PC-9 (cell line): ENCODE measurements at regions of chr15 and their contacts with region 1.

Region 1: DNA sequence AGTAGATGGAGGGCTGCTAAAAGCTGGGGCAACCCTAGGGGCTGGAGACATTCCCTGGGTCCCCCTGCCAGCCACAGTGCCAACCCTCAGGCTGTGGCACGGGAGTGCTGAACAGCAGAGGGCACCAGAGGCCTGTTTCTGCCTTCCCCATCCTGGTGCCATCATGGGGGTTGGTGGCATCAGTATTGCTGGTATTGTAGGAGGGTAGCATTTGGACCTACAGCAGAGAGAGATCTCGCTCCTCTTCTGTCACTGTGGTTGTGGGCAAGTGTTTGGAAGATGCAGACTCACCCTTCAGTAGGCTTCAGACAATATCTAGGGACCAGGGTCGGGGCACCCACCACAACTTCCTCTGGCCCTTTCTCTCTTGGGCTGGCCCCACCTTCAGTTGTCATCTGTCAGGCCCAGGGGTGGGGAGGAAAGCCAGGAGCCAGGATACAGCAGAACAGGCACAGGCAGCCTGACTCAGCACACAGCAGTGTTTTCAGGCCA is 123.5 kb downstream of the RPLP1 start:
- DNase-seq: peak in 1 of 2 experiments; percentile 71
- H3K4me3 ChIP-seq: no peak overlapping the region
- H3K27ac ChIP-seq: no peak overlapping the region
- H3K4me1 ChIP-seq: peaks cover 60% of the 10 kb centered on the region
- H3K27me3 ChIP-seq: no peaks in the 10 kb centered on the region
- CTCF ChIP-seq: peak; percentile 76

Region 2: DNA sequence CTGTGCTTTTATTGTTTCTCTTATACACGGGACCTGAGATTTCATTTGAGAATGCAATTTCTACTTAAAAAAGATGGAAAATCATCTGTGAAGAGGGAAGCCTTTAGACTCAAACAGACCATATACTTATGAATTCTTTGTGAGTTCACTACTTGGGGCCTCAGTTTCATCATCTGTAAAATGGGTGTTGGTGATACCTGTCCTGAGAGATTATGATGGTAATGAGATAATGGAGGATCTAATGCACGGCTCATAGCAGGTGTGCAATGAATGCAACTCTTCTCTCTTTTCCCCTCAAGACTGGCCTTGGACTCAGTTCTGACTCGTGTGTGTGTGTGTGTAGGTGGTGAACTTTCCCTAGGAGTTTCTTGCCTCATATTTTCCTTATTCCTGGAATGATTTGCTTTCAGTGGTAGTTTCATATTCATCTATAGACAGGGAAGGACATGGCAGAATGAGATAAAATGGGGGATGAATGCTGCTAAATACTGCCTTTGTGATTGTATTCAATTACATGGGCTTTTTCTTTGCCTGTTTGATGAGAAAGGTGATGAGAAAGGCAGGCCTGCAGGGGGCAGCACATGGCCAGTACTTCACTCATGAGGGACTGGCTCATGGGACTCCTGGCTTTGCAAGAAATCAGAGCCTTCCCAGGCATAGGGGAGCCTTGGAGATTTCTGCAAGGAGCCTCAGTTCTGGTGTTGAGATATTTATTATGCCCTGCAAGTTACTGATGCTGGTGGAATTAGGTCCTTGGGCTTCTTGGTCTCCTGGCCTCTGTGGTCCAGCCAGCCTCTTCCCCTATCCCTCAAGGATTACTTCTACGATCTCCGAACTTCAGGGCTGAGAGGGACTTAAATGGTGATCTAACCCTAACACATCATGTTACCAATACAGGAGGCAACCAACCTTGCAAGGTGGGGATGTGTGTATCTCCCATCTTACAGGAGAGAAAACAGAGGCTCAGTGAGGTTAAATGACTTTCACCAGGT is 52.8 kb before region 1 on chr15:
- CTCF ChIA-PET with region 1: no interaction called
- POLR2A ChIA-PET with region 1: no interaction called
- intact Hi-C with region 1: loop called (anchors 1 kb)
- DNase-seq: peak; percentile 40 to 75
- H3K4me3 ChIP-seq: no peak overlapping the region
- H3K27ac ChIP-seq: peak overlapping the region; percentile 58
- H3K4me1 ChIP-seq: peaks cover 19% of the 10 kb centered on the region
- H3K27me3 ChIP-seq: no peaks in the 10 kb centered on the region
- CTCF ChIP-seq: peak; percentile 73

Region 3: GRCh38 chr15:69604072-69604411 is 28.0 kb after region 1 on chr15:
- CTCF ChIA-PET with region 1: no interaction called
- POLR2A ChIA-PET with region 1: no interaction called
- intact Hi-C with region 1: no loop called
- DNase-seq: peak; percentile 44 to 84
- H3K4me3 ChIP-seq: no peak overlapping the region
- H3K27ac ChIP-seq: no peak overlapping the region
- H3K4me1 ChIP-seq: peaks cover 12% of the 10 kb centered on the region
- H3K27me3 ChIP-seq: 0 out of 2 replicates have a peak, but pooled peaks cover 6% of the 10 kb centered on the region
- CTCF ChIP-seq: peak; percentile 68

Region 4: DNA sequence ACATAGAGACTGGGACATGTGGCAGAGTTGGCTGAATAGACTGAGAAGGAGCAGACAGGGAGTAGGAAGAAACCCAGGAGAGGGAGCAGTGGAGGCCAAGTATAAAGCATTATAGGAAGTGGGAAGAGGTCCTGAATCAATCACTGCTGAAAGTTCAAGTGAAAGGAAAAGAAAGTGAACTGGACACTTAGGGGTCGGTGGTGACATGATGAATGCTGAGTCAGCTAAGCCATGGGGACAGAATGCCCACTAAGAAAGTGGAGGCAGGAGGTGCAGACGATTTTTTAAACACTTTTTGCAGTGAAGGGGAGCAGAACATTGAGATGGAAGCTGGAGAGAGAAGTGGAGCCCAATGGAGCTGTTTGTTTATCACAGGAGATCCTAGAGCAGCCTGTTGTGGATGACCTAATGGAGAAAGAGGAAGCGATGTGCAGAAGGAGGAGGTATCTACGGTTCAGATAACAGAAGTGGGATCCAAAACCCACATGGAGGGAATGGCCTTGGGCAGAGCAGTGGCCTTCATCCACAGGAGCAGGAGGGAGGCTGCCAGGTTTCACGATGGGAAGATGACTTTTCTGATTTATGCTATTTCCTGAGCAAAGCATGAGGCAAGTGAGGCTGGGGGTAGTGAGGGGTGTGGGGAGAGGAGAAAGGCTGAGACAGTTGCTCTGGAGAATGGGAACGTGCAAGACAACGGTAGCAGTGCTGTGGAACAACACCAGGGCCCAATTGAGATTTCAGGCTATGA is 84.8 kb after region 1 on chr15:
- CTCF ChIA-PET with region 1: no interaction called
- POLR2A ChIA-PET with region 1: no interaction called
- intact Hi-C with region 1: no loop called
- DNase-seq: no peak
- H3K4me3 ChIP-seq: no peak overlapping the region
- H3K27ac ChIP-seq: peak overlapping the region; percentile 86
- H3K4me1 ChIP-seq: peaks cover 52% of the 10 kb centered on the region
- H3K27me3 ChIP-seq: no peaks in the 10 kb centered on the region
- CTCF ChIP-seq: no peak

Region 5: DNA sequence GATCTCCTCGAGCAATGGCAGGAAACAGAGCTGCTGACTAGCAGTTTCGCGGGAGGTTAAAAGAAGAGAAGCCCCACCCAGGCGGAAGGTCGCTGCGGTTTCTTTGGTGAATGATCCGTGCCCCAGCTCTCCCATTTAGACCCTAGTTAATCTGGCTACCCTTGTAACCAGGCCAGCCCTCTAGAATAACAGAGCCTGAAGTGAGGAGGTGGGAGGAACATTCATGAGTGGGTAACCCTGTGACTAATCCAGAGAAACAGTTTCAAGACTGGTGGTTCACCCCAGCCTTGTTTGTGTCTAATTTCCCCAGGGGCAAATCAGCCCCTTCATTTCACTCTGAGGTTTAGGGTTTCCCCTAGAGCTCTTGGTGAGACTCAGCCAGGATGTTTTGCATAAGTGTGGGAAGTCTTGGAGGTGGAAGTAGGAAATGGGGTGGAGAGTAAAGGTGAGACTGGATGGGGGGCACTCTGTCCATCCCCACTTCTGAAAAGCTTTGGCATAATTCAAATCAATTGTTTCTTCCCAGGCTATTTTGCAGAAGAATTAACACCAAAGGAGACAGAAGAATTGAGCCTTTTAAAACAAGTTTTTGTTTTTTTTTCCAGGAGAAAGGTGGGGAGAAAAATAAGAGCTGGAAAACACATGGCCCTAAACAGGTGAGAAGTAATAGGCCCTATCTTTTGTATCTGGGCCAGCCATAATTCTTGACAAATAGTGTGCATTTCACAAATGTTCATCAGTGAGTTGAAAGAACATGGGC is 179.7 kb after region 1 on chr15:
- CTCF ChIA-PET with region 1: no interaction called
- POLR2A ChIA-PET with region 1: interaction called, 31 read pairs
- intact Hi-C with region 1: no loop called
- DNase-seq: no peak
- H3K4me3 ChIP-seq: no peak overlapping the region
- H3K27ac ChIP-seq: no peak overlapping the region
- H3K4me1 ChIP-seq: peaks cover 39% of the 10 kb centered on the region
- H3K27me3 ChIP-seq: no peaks in the 10 kb centered on the region
- CTCF ChIP-seq: no peak

Region 6: DNA sequence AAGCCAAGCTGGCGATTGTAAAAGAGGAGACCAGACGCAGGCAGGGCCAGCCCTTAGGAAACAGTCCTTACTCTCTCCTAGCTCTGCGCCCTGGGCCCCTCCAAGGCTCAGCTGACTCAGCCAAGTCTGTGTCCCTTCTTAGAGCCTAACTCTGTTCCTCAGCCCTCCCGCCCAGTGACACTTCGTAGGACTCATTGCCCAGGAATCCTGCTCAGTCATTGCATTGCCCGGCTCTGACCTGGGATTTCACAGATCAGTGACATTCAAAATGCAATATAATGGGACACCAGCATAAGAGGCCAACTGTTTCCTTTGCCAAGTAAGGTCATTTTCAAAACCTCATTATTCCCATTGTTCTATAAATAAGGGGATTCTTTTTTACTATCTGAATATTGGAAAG is 277.5 kb after region 1 on chr15:
- CTCF ChIA-PET with region 1: no interaction called
- POLR2A ChIA-PET with region 1: no interaction called
- intact Hi-C with region 1: loop called (anchors 5 kb)
- DNase-seq: peak; percentile 85 to 92
- H3K4me3 ChIP-seq: no peak overlapping the region
- H3K27ac ChIP-seq: peak overlapping the region; percentile 91
- H3K4me1 ChIP-seq: peaks cover 38% of the 10 kb centered on the region
- H3K27me3 ChIP-seq: no peaks in the 10 kb centered on the region
- CTCF ChIP-seq: no peak

Region 7: GRCh38 chr15:69891070-69891536 is 315.0 kb after region 1 on chr15:
- CTCF ChIA-PET with region 1: no interaction called
- POLR2A ChIA-PET with region 1: no interaction called
- intact Hi-C with region 1: no loop called
- DNase-seq: no peak
- H3K4me3 ChIP-seq: no peak overlapping the region
- H3K27ac ChIP-seq: no peak overlapping the region
- H3K4me1 ChIP-seq: no peaks in the 10 kb centered on the region
- H3K27me3 ChIP-seq: peaks cover 3% of the 10 kb centered on the region; the same call in 1 of the 2 replicates
- CTCF ChIP-seq: no peak

Region 8: GRCh38 chr15:70023064-70023768 is 447.1 kb after region 1 on chr15:
- CTCF ChIA-PET with region 1: no interaction called
- POLR2A ChIA-PET with region 1: no interaction called
- intact Hi-C with region 1: loop called (anchors 10 kb)
- DNase-seq: peak; percentile 45 to 66
- H3K4me3 ChIP-seq: no peak overlapping the region
- H3K27ac ChIP-seq: no peak overlapping the region
- H3K4me1 ChIP-seq: peaks cover 11% of the 10 kb centered on the region
- H3K27me3 ChIP-seq: no peaks in the 10 kb centered on the region
- CTCF ChIP-seq: no peak

Region 9: GRCh38 chr15:70488002-70488605 is 912.0 kb after region 1 on chr15:
- CTCF ChIA-PET with region 1: no interaction called
- POLR2A ChIA-PET with region 1: no interaction called
- intact Hi-C with region 1: loop called (anchors 5 kb)
- DNase-seq: peak; percentile 57 to 68
- H3K4me3 ChIP-seq: no peak overlapping the region
- H3K27ac ChIP-seq: 0 out of 2 replicates have a peak overlapping the region, but pooled peaks have one; percentile 91
- H3K4me1 ChIP-seq: peaks cover 53% of the 10 kb centered on the region
- H3K27me3 ChIP-seq: no peaks in the 10 kb centered on the region
- CTCF ChIP-seq: peak; percentile 95